MCF 10A (cell line): ENCODE measurements at regions of chr1 and their contacts with region 1.

Region 1: GRCh38 chr1:182629499-182630096 is 25.4 kb upstream of the RGS16 start:
- DNase-seq: no peak
- H3K4me3 Mint-ChIP-seq: no peak overlapping the region
- H3K27ac Mint-ChIP-seq: peak overlapping the region; percentile 4
- H3K4me1 Mint-ChIP-seq: peaks cover 34% of the 10 kb centered on the region
- H3K27me3 Mint-ChIP-seq: no peaks in the 10 kb centered on the region
- CTCF ChIP-seq: no peak

Region 2: GRCh38 chr1:182614796-182615454 is 14.7 kb before region 1 on chr1:
- CTCF ChIA-PET with region 1: interaction called, 6 read pairs
- POLR2A ChIA-PET with region 1: interaction called, 12 read pairs
- intact Hi-C with region 1: no loop called
- DNase-seq: peak; percentile 88
- H3K4me3 Mint-ChIP-seq: peak overlapping the region; percentile 63
- H3K27ac Mint-ChIP-seq: no peak overlapping the region
- H3K4me1 Mint-ChIP-seq: peaks cover 44% of the 10 kb centered on the region
- H3K27me3 Mint-ChIP-seq: no peaks in the 10 kb centered on the region
- CTCF ChIP-seq: no peak